Breast epithelium (tissue), 4 donors: ENCODE measurements at regions of chr16 and their contacts with region 1.

Region 1: DNA sequence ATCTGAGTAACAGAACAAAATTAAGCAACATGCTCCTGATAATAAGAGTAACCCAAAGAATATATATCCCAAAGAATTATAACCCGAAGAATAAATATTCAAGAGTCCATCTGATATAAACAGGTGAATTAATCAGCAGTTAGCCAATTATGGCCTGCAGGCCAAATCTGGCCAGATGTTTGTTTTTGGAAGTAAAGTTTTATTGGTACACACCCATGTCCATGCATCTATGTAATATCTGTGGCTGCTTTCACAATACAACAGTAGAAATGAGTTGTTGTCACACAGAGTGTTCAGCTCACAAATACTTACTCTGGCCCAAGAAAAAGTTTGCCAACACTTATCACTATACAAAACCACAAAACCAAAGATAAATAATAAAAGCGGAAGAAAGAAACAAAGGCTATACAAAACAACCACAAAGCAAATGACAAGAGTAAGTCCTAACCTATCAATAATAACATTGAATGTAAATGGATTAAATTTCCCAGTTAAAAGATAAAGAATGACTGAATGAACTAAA is 109.4 kb downstream of the CDYL2 start:
- DNase-seq: no peak
- H3K4me3 ChIP-seq: no peak overlapping the region
- H3K27ac ChIP-seq: no peak overlapping the region
- H3K4me1 ChIP-seq: no peaks in the 10 kb centered on the region
- H3K27me3 ChIP-seq: no peaks in the 10 kb centered on the region
- CTCF ChIP-seq: no peak
- POLR2A ChIP-seq: no peak

Region 2: DNA sequence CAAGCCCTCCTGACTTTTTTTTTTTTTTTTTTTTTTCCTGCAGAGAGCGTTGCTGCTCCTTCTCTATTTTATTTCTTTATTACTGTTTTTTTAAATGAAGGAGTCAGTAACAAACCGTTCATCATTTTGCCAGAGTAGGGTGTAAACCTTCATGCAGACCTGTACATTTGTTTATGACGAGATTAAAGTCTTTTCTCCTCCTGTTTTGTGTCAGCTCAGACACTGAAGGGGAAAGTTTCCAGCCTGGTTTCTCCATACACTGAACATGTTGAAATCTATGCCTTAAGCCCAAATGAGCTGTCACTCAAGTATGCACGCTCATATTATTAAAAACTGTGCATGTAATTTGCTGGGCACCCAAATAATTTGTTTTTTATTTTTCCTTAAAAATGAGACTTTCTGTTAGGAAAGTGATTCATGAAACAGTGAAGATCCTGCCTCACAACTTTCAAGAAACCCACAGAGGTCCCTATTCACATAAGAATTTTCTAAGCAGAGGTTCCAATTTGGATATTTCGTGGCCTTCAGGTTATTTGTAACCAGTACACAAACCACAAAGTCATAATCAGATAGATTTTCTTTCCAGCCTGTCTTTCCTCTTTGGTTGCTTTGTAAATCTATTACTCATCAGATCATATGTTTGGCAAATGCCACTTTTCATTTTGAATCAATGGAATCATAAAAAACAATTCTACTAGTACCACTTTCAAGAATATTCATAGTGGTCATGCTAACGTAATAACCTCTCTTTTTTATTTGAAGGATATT is 1794.8 kb before region 1 on chr16:
- intact Hi-C with region 1: loop called (anchors 5 kb)
- DNase-seq: no peak
- H3K4me3 ChIP-seq: no peak overlapping the region
- H3K27ac ChIP-seq: no peak overlapping the region
- H3K4me1 ChIP-seq: no peaks in the 10 kb centered on the region
- H3K27me3 ChIP-seq: no peaks in the 10 kb centered on the region
- CTCF ChIP-seq: no peak
- POLR2A ChIP-seq: no peak

Region 3: DNA sequence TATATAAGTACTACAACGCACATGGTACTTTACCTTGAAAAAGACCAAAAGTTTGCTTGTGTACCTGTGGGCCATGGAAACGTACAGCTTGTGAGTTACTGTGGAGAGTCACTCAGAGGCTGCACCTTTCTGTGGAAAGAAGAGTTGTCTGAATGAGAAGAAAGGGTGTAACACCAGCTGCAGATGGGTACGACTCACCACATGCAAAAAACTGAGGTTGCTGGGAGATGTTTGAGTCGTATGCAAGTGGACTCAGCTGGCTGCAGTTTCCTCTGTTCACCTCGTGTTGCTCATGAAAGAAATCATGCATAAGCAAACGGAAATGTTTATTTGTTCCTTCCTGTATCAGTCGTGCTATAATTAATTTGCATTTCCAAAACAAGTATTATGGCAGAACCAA is 176.6 kb before region 1 on chr16:
- intact Hi-C with region 1: no loop called
- DNase-seq: no peak
- H3K4me3 ChIP-seq: no peak overlapping the region
- H3K27ac ChIP-seq: no peak overlapping the region
- H3K4me1 ChIP-seq: no peaks in the 10 kb centered on the region
- H3K27me3 ChIP-seq: no peaks in the 10 kb centered on the region
- CTCF ChIP-seq: no peak
- POLR2A ChIP-seq: no peak

Region 4: GRCh38 chr16:80656161-80656560 is 38.8 kb before region 1 on chr16:
- intact Hi-C with region 1: no loop called
- DNase-seq: no peak
- H3K4me3 ChIP-seq: no peak overlapping the region
- H3K27ac ChIP-seq: peak overlapping the region in 1 of 2 donors; percentile 38
- H3K4me1 ChIP-seq: no peaks in the 10 kb centered on the region
- H3K27me3 ChIP-seq: no peaks in the 10 kb centered on the region
- CTCF ChIP-seq: no peak
- POLR2A ChIP-seq: no peak